Activated naive CD4-positive, alpha-beta T cell treated with anti-CD3 and anti-CD28 coated beads for 36 hours (primary cell): ENCODE measurements at regions of chr7 and their contacts with region 1.

Region 1: DNA sequence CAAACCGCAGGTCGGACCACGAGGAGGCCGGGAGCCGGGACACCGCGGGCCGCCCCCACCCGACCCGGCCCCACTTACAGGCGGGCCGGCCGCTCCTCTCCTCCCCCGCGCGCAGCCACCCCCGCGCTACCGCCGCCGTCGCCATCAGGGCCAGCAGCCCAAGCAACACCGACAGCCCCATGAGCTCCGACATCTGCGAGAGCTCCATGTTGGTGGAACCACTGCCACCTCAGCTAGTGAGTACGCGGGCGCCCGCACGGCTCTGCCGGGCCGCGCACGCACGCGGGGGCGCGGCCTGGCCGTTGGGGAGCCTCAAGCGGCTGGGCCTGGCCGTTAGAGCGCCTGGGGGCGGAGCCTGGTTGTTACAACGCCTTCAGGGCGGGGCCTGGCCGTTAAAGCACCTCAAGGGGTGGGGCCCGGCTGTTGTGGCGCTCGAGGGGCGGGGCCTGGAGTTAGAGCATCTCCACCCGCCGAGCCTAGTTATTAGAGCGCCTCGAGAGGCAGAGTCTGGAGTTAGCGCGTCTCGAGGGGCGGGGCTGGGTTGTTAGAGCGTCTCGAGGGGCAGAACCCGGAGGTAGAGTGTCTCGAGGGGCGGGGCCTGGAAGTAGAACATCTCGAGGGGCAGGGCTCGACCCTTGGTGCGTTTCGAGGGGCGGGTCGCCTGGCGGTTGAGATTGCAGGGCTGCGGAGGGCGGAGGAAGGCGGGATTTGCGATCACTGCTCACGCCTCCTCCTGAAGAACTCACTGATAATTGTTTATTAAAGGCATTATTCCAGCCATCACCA is at the start of gene TBL2:
- DNase-seq: peak; percentile 99
- H3K4me3 Mint-ChIP-seq: peak within 1 kb of the TSS; percentile 87
- H3K27ac Mint-ChIP-seq: peak within 1 kb of the TSS; percentile 94
- H3K4me1 Mint-ChIP-seq: peaks cover 32% of the 10 kb centered on the region
- H3K27me3 Mint-ChIP-seq: no peaks in the 10 kb centered on the region
- total RNA-seq, gene TBL2: 21.5 to 23.6 TPM

Region 2: DNA sequence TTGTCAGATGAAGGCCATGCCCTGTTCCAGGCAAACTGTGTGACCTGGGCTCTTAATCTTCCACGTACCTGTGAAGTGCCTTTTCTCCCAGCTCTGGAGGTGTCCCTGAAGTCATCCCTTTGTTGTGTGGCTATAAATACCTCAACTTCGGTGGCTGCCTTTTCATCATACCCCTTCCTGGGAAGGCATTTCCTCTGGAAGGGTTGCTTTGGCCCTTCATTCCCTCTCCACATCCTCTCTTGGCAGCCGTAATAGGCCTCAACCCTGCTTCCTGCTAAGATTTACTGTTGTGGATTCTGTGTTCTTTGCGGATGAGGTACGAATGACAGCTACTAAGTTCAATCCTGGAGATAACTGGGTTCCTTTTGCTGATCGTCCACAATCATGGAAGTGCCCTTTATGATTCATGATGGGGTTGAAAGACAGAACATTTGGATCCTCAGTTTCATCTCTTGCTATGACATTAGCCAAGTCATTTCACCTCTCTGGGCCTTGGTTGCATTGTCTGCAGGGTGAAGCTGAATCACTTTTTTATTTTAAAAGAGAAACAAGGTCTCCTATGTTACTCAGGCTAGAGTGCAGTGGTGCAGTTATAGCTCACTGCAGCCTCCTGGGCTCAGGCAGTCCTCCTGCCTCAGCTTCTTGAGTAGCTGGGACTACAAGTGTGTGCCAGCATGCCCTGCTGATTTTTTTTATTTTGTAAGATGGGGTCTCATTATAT is 226.9 kb before region 1 on chr7:
- CTCF ChIA-PET with region 1: no interaction called
- intact Hi-C with region 1: no loop called
- DNase-seq: no peak
- H3K4me3 Mint-ChIP-seq: no peak overlapping the region
- H3K27ac Mint-ChIP-seq: no peak overlapping the region
- H3K4me1 Mint-ChIP-seq: no peaks in the 10 kb centered on the region
- H3K27me3 Mint-ChIP-seq: no peaks in the 10 kb centered on the region

Region 3: DNA sequence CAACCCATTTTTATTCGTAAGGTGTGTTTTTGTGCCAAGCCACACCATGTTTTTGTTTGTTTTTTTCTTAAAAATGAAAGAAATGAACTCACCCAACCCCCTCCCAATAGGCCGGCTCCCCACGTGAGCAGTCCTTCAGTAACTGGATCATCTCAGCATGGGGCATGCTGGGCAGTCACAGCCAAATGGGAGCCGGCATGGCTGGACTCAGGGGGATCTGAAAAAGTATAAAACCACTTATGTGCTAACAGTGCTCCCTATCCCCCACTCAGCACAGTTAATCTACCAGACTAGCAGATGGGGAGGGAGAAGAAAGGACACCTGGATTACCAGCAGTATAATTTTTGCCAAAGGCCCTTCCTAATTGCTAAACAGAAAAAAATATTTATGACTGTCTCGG is 95.8 kb before region 1 on chr7:
- CTCF ChIA-PET with region 1: no interaction called
- intact Hi-C with region 1: loop called (anchors 10 kb)
- DNase-seq: no peak
- H3K4me3 Mint-ChIP-seq: no peak overlapping the region
- H3K27ac Mint-ChIP-seq: no peak overlapping the region
- H3K4me1 Mint-ChIP-seq: peaks cover 15% of the 10 kb centered on the region
- H3K27me3 Mint-ChIP-seq: no peaks in the 10 kb centered on the region

Region 4: GRCh38 chr7:73541722-73542121 is 36.8 kb before region 1 on chr7:
- CTCF ChIA-PET with region 1: no interaction called
- intact Hi-C with region 1: no loop called
- DNase-seq: no peak
- H3K4me3 Mint-ChIP-seq: no peak overlapping the region
- H3K27ac Mint-ChIP-seq: no peak overlapping the region
- H3K4me1 Mint-ChIP-seq: peaks cover 9% of the 10 kb centered on the region
- H3K27me3 Mint-ChIP-seq: no peaks in the 10 kb centered on the region

Region 5: DNA sequence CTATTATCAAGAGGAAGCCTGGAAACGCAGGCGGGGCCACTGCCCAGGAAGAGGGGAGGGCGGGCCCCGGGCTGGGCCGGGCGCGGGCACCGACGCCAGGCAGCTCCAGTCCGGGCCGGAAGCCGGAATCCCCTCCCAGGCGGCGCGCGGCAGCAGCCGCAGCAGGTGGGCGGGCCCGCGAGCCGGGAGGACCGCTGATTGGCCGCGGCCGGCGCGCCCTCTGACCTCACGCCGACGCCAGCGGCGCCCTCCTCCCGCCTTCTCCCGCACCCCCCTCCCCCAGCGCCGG is 21.5 kb before region 1 on chr7:
- CTCF ChIA-PET with region 1: interaction called, 6 read pairs
- intact Hi-C with region 1: loop called (anchors 1 kb)
- DNase-seq: peak; percentile 92
- H3K4me3 Mint-ChIP-seq: peak overlapping the region; percentile 86
- H3K27ac Mint-ChIP-seq: peak overlapping the region; percentile 89
- H3K4me1 Mint-ChIP-seq: peaks cover 41% of the 10 kb centered on the region
- H3K27me3 Mint-ChIP-seq: no peaks in the 10 kb centered on the region

Region 6: DNA sequence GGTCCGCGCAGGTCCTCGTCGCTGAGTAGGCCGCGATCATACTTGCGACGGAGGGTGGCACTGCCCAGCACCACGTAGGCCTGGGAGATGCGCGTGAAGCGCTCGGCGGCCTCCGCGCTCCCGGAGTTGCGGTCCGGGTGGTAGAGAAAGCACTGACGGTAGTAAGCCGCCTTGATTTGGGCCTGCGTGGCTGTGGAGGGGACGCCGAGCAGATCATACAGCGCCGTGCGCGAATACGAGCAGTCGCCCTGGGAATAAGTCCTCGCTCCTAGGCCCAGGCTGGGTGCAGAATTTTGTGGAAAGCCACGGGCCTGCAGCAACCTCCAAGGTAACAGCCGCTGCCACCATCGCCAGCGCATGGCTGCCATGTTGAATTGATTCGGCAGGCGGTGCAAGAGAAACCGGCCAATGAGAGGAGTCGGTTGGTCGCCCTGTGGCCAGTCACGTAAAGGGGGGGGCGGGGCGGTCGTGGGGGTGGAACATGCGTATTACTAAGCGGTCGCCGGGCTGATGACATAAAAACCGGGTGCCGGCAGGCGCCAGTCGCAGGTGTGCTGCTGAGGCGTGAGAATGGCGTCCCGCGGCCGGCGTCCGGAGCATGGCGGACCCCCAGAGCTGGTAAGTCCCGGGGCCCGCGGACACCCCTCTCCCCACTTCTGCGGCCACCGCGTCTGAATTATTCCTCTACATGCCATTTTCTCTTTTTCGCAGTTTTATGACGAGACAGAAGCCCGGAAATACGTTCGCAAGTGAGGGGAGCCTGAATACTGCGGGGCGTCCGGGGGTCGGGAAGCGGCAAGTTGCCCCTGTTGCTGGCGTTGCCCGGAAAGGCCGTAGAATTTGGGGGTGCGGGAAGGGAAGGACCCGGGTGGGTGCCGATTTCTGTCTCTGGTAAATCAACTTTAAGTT is 104.8 kb after region 1 on chr7 and contains the starts of genes BUD23 and DNAJC30:
- CTCF ChIA-PET with region 1: no interaction called
- intact Hi-C with region 1: loop called (anchors 1 kb)
- DNase-seq: peak; percentile 99
- H3K4me3 Mint-ChIP-seq: peak within 1 kb of the TSS; percentile 98
- H3K27ac Mint-ChIP-seq: peak within 1 kb of the TSS; percentile 91
- H3K4me1 Mint-ChIP-seq: peaks cover 47% of the 10 kb centered on the region
- H3K27me3 Mint-ChIP-seq: no peaks in the 10 kb centered on the region
- total RNA-seq, gene BUD23: 95.1 to 110 TPM
- total RNA-seq, gene DNAJC30: 4.2 to 4.4 TPM

Region 7: GRCh38 chr7:74173866-74174605 is 595.5 kb after region 1 on chr7 and contains the start of gene EIF4H:
- CTCF ChIA-PET with region 1: no interaction called
- intact Hi-C with region 1: loop called (anchors 5 kb)
- DNase-seq: peak; percentile 95
- H3K4me3 Mint-ChIP-seq: peak within 1 kb of the TSS; percentile 87
- H3K27ac Mint-ChIP-seq: peak within 1 kb of the TSS; percentile 88
- H3K4me1 Mint-ChIP-seq: peaks cover 39% of the 10 kb centered on the region
- H3K27me3 Mint-ChIP-seq: no peaks in the 10 kb centered on the region
- total RNA-seq, gene EIF4H: 492 to 518 TPM